Activated T-helper 1 cell treated with anti-CD3 and anti-CD28 coated beads, Interleukin-12 subunit alpha, Interleukin-12 subunit beta, Interleukin-2, Interleukin-4 antibody, amounts not matched to agents 30 ng/mL and 10 ng/mL and 1 ng/mL, durations not matched to agents 14 hours and 24 hours and 36 hours (primary cell): ENCODE measurements at regions of chr18 and their contacts with region 1.

Region 1: DNA sequence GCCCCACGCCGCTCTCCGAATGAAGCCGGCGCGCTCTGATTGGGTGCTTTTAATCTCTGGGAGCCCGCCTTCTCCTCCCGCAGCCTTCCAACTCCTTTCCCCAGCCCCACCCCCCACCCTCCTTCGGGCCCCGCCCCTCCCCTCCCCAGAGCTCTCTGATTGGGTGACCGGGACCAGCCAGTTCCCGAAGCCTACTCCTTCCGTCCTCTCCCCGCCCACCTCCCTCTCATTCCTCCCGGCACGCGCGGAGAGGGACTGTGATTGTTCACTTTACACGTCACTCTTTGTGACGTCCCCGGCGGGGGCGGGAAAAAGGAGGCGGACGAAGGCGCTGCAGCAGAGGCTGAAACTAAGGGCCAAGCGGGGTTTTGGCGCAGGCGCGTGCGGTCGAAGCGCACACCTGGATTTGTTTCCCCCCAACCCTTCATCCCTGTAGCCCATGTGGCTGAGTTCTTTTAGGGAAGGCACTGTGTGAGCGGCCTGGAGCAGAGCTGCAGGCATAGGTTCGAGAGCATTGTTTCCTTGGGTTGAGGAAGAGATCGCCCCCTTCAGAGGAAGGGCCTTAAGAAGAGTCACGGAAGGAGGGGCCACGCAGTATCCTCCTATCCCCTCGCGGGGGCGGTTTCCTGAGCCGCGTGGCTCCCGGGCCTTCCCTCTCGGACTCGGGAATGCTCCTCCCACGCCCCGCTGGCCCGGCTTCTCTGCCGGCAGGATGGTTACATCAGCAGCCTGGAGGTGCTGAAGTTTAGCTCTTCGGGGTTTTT is at the start of gene MEX3C:
- DNase-seq: peak; percentile 99
- H3K4me3 Mint-ChIP-seq: peak within 1 kb of the TSS; percentile 96
- H3K27ac Mint-ChIP-seq: peak within 1 kb of the TSS; percentile 99
- H3K4me1 Mint-ChIP-seq: peaks cover 28% of the 10 kb centered on the region
- H3K27me3 Mint-ChIP-seq: no peaks in the 10 kb centered on the region
- total RNA-seq, gene MEX3C: 67.6 and 68.0 TPM in 2 replicates

Region 2: GRCh38 chr18:50374753-50375391 is 823.0 kb before region 1 on chr18 and contains the start of gene SKA1:
- intact Hi-C with region 1: loop called (anchors 5 kb)
- DNase-seq: peak; percentile 89
- H3K4me3 Mint-ChIP-seq: peak within 1 kb of the TSS; percentile 91
- H3K27ac Mint-ChIP-seq: peak within 1 kb of the TSS; percentile 81
- H3K4me1 Mint-ChIP-seq: peaks cover 23% of the 10 kb centered on the region
- H3K27me3 Mint-ChIP-seq: peaks cover 2% of the 10 kb centered on the region
- total RNA-seq, gene SKA1: 20.7 and 23.3 TPM in 2 replicates

Region 3: GRCh38 chr18:50967714-50968661 is 229.9 kb before region 1 on chr18 and contains the start of gene ELAC1:
- intact Hi-C with region 1: loop called (anchors 5 kb)
- DNase-seq: peak; percentile 60
- H3K4me3 Mint-ChIP-seq: peak within 1 kb of the TSS; percentile 96
- H3K27ac Mint-ChIP-seq: peak within 1 kb of the TSS; percentile 94
- H3K4me1 Mint-ChIP-seq: peaks cover 22% of the 10 kb centered on the region
- H3K27me3 Mint-ChIP-seq: peaks cover 2% of the 10 kb centered on the region
- total RNA-seq, gene ELAC1: 6.7 and 7.7 TPM in 2 replicates

Region 4: DNA sequence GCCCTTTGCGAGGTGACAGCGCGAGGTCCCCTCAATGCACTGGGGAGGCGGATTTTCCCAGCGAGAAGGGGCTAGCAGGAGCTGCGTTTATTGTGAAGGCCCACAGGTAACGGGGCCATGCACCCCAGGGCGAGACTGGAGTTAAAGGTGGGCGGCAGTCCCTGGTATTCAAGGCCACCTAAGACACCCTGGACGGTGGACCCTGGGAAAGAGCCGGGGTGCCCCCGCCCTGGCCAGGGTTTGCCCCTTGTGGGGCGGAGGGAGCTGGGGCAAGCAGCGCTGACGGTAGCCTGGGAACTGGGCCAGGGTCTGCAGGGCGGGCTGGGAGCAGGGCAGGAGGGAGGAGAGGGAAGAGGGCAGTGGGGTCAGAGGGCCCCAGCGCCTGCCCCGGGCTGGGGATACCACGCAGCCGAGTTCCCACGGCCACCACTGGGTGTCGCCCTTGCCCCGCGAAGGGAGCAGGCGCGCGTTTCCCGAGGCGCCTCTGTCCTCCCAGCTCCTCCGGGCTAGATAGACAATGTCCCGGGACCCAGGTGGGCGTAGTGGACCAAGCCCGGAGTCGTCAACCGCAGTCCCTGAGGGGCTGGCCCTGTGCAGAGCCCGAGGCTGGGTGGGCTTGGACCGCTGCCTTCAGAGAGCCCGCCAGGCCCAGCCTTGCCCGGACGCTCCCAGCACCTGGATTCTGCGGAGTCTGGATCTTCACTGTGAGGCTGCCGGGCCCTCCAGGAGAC is 87.6 kb before region 1 on chr18:
- intact Hi-C with region 1: loop called (anchors 2 kb)
- DNase-seq: peak; percentile 57
- H3K4me3 Mint-ChIP-seq: no peak overlapping the region
- H3K27ac Mint-ChIP-seq: no peak overlapping the region
- H3K4me1 Mint-ChIP-seq: peaks cover 22% of the 10 kb centered on the region
- H3K27me3 Mint-ChIP-seq: no peaks in the 10 kb centered on the region

Region 5: DNA sequence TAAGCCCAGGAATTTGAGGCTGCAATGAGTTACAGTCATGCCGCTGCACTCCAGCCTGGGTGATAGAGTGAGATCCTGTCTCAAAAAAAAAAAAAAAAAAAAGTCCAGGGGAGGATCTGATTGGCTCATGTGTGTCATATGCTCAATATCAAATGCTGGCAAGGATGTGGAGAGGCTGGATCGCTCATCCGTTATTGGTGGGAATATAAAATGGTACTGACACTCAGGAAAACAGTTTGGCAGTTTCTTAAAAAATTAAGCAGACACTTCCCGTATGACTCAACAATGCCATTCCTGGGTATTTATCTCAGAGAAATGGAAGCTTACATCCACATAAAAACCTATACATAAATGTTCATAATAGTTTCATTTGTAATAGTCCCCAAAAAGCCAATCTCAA is 69.3 kb before region 1 on chr18:
- intact Hi-C with region 1: no loop called
- DNase-seq: no peak
- H3K4me3 Mint-ChIP-seq: no peak overlapping the region
- H3K27ac Mint-ChIP-seq: no peak overlapping the region
- H3K4me1 Mint-ChIP-seq: no peaks in the 10 kb centered on the region
- H3K27me3 Mint-ChIP-seq: no peaks in the 10 kb centered on the region

Region 6: DNA sequence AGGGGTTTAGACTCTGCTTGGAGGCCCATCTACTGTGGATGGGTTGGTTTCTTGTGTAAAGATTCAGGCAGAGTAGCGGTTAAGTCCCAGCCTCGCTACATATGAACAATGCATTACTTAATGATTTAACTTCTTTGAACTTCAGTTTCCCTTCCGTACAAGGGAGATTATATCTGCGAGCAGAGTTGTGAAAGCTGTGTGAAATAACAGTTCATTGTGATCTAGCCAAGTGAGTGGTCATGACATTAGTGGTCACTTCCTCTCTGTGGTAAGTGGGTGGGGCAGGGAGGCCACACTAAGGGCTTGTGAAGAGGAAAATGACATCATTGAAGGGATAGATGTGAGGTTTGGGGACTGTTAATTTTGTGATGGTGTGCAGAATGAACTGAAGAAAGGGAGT is 13.7 kb after region 1 on chr18:
- intact Hi-C with region 1: loop called (anchors 1 kb)
- DNase-seq: peak; percentile 63
- H3K4me3 Mint-ChIP-seq: peak overlapping the region; percentile 7
- H3K27ac Mint-ChIP-seq: peak overlapping the region; percentile 62
- H3K4me1 Mint-ChIP-seq: peaks cover 14% of the 10 kb centered on the region
- H3K27me3 Mint-ChIP-seq: peaks cover 2% of the 10 kb centered on the region